ENCODE measurements at regions of chr13 and their contacts with region 1.

Region 1: DNA sequence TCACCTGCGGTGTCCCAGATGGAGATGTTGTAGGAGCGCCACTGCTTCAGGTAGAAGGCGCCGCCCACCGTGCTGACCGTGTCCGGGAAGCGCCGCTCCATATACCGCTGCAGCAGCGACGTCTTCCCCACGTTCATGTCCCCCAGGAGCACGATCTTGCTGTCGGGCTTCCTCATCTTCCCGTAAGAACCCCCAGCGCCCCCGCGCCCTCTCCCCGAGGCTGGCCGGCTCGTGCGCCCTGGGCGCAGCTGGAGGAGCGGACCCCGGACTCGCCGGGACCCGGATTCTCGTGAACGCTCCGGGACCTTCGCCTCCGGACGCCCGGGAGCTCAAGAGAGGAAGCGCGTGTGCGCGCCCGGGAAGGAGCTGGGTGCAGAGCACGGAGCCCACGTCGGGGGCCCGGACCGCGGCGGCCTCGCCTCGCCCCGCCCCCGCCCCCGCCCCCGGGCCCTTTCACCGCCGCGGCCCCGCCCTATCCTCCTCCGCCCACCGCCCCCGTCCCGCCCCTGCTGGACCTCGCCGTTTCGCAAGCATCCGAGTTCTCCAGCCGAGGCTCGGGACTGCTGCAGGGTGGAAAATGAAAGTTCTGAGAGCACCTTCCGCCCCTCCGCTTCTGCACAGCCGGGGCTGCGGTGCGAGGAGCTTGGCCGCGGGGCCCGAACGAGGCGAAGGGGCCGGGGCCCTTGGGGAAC is at the start of gene RAB20:
- DNase-seq: peak; percentile 95
- H3K4me3 ChIP-seq: peak within 1 kb of the TSS; percentile 57 to 89 (median 76)
- H3K27ac ChIP-seq: peak within 1 kb of the TSS; percentile 92 to 93 (median 92)
- H3K4me1 ChIP-seq: peaks cover 0 to 44% (median 25%) of the 10 kb centered on the region in 4 donors
- H3K27me3 ChIP-seq: no peaks in the 10 kb centered on the region
- CTCF ChIP-seq: no peak
- EP300 ChIP-seq: no peak
- POLR2A ChIP-seq: peak; percentile 42 to 43
- total RNA-seq, gene RAB20: 6.9 to 21.3 (median 15.1) TPM

Region 2: DNA sequence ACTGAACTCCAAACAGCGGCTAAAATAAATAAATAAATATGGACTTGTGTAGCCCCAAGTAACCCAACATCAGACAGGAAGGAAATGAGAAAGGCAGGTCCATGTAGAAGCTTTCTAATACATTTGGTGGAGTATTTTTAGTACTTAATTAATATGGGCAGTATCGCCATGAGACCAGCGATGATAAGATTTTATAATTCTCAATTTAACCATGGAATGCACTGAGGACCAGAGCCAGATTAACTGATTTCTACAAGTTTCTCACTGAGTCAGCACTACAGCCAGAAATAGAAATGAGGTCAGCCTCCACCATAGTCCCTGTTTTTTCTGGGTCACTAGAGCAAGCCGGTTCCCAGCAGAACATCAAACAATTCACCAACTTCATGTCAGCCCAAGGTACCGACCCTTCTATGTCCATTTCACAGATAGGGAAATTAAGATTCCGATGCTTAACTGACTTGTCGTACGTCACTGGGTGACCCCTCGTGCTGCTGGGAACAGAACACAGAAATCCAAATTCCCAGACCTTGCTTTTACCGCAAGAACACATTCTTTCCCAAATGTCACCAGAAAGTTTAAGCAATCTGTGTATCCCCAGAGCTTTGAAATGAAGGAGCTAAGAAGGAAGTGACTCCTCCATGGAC is 345.0 kb before region 1 on chr13:
- intact Hi-C with region 1: loop called (anchors 10 kb)
- DNase-seq: no peak
- H3K4me3 ChIP-seq: no peak overlapping the region
- H3K27ac ChIP-seq: peak overlapping the region; percentile 68 to 87 (median 78)
- H3K4me1 ChIP-seq: peaks cover 0 to 71% (median 66%) of the 10 kb centered on the region in 4 donors
- H3K27me3 ChIP-seq: no peaks in the 10 kb centered on the region
- CTCF ChIP-seq: no peak
- EP300 ChIP-seq: peak; percentile 19 to 88 (median 52)
- POLR2A ChIP-seq: no peak

Region 3: DNA sequence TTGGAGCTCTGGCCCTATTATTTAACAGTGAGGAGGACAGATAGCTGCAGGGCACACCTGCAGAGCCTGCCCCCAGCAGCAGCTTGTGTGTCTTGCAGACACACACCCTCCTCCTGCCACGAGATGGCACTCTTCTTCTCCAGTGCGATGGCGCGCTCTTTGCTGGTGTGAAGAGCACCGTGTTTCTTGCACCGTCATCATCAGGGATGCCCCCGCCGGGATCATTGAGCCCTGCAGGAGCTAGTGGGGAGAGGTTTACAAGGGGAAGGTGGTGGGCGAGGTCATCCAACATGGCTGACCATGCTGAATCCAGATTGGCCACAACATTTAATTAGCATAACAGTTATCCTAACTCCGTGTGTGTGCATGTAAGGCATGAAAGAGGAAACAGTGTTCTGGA is 105.5 kb before region 1 on chr13:
- intact Hi-C with region 1: loop called (anchors 2 kb)
- DNase-seq: peak; percentile 92
- H3K4me3 ChIP-seq: no peak overlapping the region
- H3K27ac ChIP-seq: peak overlapping the region in 3 of 4 donors; percentile 71 to 98 (median 82)
- H3K4me1 ChIP-seq: peaks cover 0 to 38% (median 36%) of the 10 kb centered on the region in 4 donors
- H3K27me3 ChIP-seq: no peaks in the 10 kb centered on the region
- CTCF ChIP-seq: peak; percentile 76 to 85 (median 78)
- EP300 ChIP-seq: no peak
- POLR2A ChIP-seq: no peak

Region 4: GRCh38 chr13:110509971-110510786 is 51.3 kb before region 1 on chr13:
- intact Hi-C with region 1: loop called (anchors 5 kb)
- DNase-seq: no peak
- H3K4me3 ChIP-seq: no peak overlapping the region
- H3K27ac ChIP-seq: peak overlapping the region; percentile 18 to 61 (median 48)
- H3K4me1 ChIP-seq: peaks cover 0 to 50% (median 34%) of the 10 kb centered on the region in 4 donors
- H3K27me3 ChIP-seq: no peaks in the 10 kb centered on the region
- CTCF ChIP-seq: no peak
- EP300 ChIP-seq: no peak
- POLR2A ChIP-seq: no peak

Region 5: DNA sequence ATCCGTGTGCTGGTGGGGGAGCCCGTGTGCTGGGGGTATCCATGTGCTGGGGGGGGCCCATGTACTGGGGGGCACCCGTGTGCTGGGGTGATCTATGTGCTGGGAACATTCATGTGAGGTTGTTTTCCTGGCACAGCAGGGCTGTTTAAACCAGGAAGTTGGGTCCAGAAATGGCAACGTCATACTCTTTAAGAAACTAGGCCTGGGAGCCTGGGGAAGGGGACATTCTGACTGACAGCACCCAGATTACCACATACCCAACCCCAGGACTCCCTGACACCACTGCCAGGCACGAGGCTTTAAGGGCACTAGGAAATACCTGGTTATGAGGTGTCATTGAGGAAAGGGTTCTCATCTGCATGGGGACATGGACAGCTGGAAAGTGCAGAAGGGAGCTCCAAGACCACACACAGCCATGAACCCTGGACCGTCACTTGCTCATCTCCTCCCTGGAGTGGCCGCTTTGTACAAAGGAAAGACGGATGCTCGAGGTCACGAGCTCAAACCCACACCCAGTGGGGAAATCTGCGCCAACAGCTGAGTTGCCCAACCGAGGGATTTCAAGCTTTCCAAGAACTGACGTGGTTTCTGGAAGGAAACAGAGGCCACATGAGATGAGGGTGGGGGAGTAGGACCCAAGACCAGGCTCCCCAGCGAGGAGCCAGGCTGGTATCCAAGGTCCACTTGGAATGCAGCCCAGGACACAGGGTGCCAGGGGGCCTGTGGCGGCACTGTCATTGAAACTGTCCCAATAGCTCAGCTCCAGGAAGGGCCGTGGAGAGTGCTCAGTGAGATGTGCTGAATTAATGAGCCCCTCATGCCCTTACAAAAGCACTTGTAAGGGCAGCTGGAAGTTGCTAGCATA is 40.8 kb before region 1 on chr13:
- intact Hi-C with region 1: loop called (anchors 5 kb)
- DNase-seq: peak; percentile 94
- H3K4me3 ChIP-seq: no peak overlapping the region
- H3K27ac ChIP-seq: peak overlapping the region; percentile 56 to 81 (median 75)
- H3K4me1 ChIP-seq: peaks cover 0 to 42% (median 31%) of the 10 kb centered on the region in 4 donors
- H3K27me3 ChIP-seq: no peaks in the 10 kb centered on the region
- CTCF ChIP-seq: no peak
- EP300 ChIP-seq: peak; percentile 79 to 98 (median 94)
- POLR2A ChIP-seq: no peak

Region 6: GRCh38 chr13:110615322-110616102 is 54.0 kb after region 1 on chr13 and contains the start of gene NAXD:
- intact Hi-C with region 1: loop called (anchors 5 kb)
- DNase-seq: peak; percentile 97
- H3K4me3 ChIP-seq: peak within 1 kb of the TSS; percentile 80 to 93 (median 81)
- H3K27ac ChIP-seq: peak within 1 kb of the TSS; percentile 94 to 97 (median 96)
- H3K4me1 ChIP-seq: peaks cover 0 to 50% (median 46%) of the 10 kb centered on the region in 4 donors
- H3K27me3 ChIP-seq: no peaks in the 10 kb centered on the region
- CTCF ChIP-seq: no peak
- EP300 ChIP-seq: peak in 1 of 4 donors; percentile 82
- POLR2A ChIP-seq: peak; percentile 35 to 50
- total RNA-seq, gene NAXD: 33.5 to 41.1 (median 37.2) TPM